ENCODE measurements at regions of chr19 and their contacts with region 1.

Region 1: GRCh38 chr19:9796113-9796773 is 22.6 kb downstream of the FBXL12 start:
- DNase-seq: peak; percentile 72 to 91 (median 87)
- ATAC-seq: peak; percentile 7 to 8
- H3K4me3 ChIP-seq: no peak overlapping the region
- H3K27ac ChIP-seq: no peak overlapping the region
- H3K4me1 ChIP-seq: no peaks in the 10 kb centered on the region
- H3K27me3 ChIP-seq: no peaks in the 10 kb centered on the region

Region 2: DNA sequence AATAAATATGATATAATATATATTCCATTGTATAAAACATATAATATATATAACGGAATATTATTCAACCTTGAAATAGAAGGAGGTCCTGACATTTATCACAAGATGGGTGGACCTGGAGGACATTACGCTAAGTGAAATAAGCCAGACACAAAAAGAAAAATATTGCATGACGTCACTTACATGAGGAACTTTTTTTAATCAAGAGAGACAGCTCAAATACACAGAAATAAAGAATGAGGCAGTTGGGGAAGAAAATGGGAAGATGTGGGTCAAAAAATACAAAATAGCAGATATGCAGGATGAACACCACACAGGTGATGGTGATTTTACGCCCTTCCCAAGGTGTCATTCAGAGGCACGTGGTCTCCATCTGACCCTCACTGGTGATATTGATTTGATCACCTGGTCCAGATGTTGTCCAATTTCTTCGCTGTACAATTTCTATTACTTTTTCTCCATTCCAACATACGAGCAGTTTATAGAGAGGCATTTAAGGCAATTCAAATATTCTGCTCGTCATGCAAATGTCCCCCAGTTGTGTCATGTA is 656.6 kb before region 1 on chr19:
- intact Hi-C with region 1: loop called in 1 of 4 experiments (anchors 10 kb)
- DNase-seq: no peak
- ATAC-seq: no peak
- H3K4me3 ChIP-seq: peak overlapping the region; percentile 89
- H3K27ac ChIP-seq: no peak overlapping the region
- H3K4me1 ChIP-seq: no peaks in the 10 kb centered on the region
- H3K27me3 ChIP-seq: no peaks in the 10 kb centered on the region

Region 3: DNA sequence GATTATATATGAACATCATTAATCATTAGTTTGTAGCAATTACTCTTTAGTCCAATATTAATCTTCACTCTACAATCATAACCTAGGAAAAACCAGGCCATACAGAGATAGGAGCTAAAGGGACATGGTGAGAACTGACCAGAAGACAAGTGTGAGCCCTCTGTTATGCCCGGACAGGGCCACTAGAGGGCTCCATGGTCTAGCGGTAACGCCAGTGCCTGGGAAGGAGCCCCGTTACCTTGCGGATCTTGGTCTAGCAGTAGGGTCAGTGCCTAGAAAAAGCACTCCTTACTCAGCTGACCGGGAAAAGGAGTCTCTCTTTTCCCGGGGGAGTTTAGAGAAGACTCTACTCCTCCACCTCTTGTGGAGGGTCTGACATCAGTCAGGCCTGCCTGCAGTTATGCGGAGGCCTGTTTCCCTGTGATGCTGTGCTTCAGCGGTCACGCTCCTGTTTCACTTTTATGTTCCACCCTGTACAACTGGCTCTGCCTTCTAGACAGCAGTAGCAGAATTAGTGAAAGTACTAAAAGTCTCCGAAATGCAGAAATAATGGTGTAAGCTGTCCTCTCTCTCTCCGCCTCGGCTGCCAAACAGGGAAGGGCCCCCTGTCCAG is 590.6 kb before region 1 on chr19:
- intact Hi-C with region 1: loop called in 2 of 4 experiments (anchors 5 to 10 kb)
- DNase-seq: peak; percentile 70 to 88 (median 84)
- ATAC-seq: peak; percentile 72 to 75
- H3K4me3 ChIP-seq: peak overlapping the region; percentile 14
- H3K27ac ChIP-seq: no peak overlapping the region
- H3K4me1 ChIP-seq: no peaks in the 10 kb centered on the region
- H3K27me3 ChIP-seq: no peaks in the 10 kb centered on the region

Region 4: DNA sequence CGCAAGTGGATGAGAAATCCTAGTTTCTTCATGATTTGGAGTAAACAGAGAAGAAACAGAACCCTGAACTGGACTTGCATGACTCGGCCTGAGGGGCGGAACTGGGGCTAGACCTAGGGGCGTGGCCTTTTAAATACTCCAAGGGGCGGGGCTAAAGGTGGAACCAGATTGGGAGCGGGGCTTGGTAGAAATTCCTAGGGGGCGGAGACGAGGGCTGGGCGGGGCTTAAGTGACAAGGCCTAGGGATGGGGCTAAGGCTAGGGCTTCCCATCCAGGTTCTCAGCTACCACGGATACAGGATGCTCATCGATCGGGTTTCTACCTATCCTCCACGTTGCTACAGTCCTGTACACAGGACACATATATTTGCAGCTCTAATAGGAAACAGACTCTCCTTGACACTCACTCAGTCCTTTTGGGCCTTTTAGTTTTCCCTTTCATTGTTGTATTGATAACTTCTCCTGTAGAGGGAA is 486.2 kb before region 1 on chr19:
- intact Hi-C with region 1: loop called in 2 of 4 experiments (anchors 5 kb)
- DNase-seq: peak; percentile 95 to 97 (median 97)
- ATAC-seq: peak; percentile 97 to 98
- H3K4me3 ChIP-seq: peak overlapping the region; percentile 94
- H3K27ac ChIP-seq: peak overlapping the region; percentile 87
- H3K4me1 ChIP-seq: no peaks in the 10 kb centered on the region
- H3K27me3 ChIP-seq: no peaks in the 10 kb centered on the region

Region 5: GRCh38 chr19:9621156-9622037 is 174.8 kb before region 1 on chr19 and contains the start of gene ZNF561:
- intact Hi-C with region 1: loop called (anchors 5 to 10 kb)
- DNase-seq: peak; percentile 86 to 94 (median 93)
- ATAC-seq: peak; percentile 95 to 96
- H3K4me3 ChIP-seq: peak within 1 kb of the TSS; percentile 65
- H3K27ac ChIP-seq: peak within 1 kb of the TSS; percentile 84
- H3K4me1 ChIP-seq: peaks cover 8% of the 10 kb centered on the region
- H3K27me3 ChIP-seq: no peaks in the 10 kb centered on the region
- total RNA-seq, gene ZNF561: 20.3 to 24.5 (median 22.7) TPM

Region 6: GRCh38 chr19:9627856-9628255 is 168.4 kb before region 1 on chr19:
- intact Hi-C with region 1: loop called (anchors 5 to 10 kb)
- DNase-seq: no peak
- ATAC-seq: no peak
- H3K4me3 ChIP-seq: no peak overlapping the region
- H3K27ac ChIP-seq: no peak overlapping the region
- H3K4me1 ChIP-seq: no peaks in the 10 kb centered on the region
- H3K27me3 ChIP-seq: no peaks in the 10 kb centered on the region

Region 7: GRCh38 chr19:9645472-9645871 is 150.8 kb before region 1 on chr19:
- intact Hi-C with region 1: no loop called
- DNase-seq: no peak
- ATAC-seq: no peak
- H3K4me3 ChIP-seq: no peak overlapping the region
- H3K27ac ChIP-seq: no peak overlapping the region
- H3K4me1 ChIP-seq: peaks cover 2% of the 10 kb centered on the region
- H3K27me3 ChIP-seq: no peaks in the 10 kb centered on the region

Region 8: DNA sequence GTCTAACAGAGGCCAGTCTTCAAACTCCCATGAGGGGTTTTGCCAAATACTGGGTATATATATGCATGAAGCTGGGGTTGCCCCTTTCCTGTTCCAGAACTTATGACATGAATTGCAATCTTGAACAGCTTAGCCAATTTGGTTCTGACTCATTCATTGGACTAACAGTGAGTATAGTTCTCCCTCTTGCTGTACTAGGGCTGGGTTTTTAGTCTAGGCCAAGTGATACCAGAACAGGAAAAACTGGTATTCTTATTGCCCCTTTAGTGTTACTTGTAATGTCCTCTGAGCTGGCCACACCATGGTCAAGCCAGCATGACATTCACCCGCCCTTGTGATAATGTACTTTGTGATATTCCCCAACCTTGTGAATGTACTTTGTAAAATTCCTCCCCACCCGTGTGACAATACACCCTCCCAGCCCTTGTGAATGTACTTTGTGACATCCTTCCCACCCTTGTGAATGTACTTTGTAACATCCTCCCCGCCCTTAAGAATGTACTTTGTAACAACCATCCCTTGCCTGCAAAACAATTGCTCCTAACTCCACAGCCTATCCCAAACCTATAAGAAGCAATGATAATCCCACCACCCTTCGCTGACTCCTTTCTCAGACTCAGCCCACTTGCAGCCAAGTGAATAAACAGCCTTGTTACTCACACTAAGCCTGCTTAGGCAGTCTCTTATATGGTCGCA is 54.6 kb before region 1 on chr19:
- intact Hi-C with region 1: no loop called
- DNase-seq: no peak
- ATAC-seq: no peak
- H3K4me3 ChIP-seq: no peak overlapping the region
- H3K27ac ChIP-seq: no peak overlapping the region
- H3K4me1 ChIP-seq: no peaks in the 10 kb centered on the region
- H3K27me3 ChIP-seq: no peaks in the 10 kb centered on the region

Region 9: DNA sequence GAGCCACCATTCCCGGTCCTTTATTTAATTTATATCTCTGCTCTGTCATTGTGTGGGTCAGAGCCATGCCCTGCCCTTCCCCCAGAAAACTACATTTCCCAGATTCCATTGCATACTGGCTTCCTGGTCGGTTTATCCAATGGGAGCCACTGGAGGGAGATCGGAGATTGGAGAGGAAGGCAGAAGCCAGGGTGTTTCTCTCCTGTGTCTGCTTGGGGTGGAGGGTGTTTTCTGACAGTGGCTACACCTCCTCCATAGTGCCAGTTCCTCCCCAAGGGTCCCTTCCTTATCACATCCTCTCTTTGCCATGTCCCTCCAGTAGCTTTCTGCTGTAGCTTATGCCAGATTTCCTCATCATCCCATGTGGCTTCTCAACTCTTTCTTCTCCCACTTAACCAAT is 121.1 kb after region 1 on chr19:
- intact Hi-C with region 1: no loop called
- DNase-seq: no peak
- ATAC-seq: peak; percentile 73 to 78
- H3K4me3 ChIP-seq: no peak overlapping the region
- H3K27ac ChIP-seq: no peak overlapping the region
- H3K4me1 ChIP-seq: no peaks in the 10 kb centered on the region
- H3K27me3 ChIP-seq: no peaks in the 10 kb centered on the region